Dorsolateral prefrontal cortex (tissue), 120 donors: ENCODE measurements at regions of chr10 and their contacts with region 1.

Region 1: DNA sequence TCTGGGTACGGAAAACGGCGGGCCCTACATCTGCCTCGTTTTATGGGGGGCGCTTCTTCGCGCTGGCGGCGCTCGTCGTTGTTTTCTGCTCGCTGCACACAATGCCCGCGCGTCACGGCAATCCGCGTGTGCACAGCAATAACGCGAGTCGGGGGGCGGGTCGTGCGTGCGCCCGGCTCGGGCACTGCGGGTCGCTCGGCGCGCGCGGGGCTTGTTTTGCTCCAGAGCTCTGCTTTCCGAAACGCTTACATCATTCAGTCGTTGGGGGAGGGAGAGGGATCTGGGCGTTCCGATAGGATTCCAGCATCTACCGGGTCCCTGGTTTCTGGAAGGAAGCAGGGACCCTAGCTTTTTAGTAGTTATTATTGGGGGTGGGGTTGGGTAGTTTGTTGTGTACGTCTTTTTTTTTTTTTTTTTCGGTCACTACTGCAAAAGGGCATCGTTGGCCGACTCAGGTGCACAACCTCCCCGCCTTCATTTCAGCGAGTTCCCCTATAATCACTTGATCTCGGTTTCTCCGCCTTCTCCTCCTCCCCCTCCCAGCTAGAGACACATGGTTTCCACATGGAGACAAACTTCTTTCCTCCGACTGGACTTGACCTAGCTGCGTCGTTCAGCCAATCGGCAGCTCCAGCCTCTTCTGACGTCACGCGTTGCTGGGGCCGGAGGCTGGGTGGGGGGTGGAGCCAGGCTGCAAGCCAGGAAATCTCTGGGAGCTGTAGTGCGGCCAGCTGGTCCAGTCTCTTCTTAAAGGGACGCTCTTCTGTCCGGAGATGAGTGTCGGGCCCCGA is 3.5 kb downstream of the MXI1 start:
- DNase-seq: peak; percentile 97 to 100 (median 99)
- H3K4me3 ChIP-seq: peak overlapping the region; percentile 57 to 96 (median 86)
- H3K27ac ChIP-seq: peak overlapping the region; percentile 88 to 100 (median 100)
- H3K27me3 ChIP-seq: no peaks in the 10 kb centered on the region
- CTCF ChIP-seq: peak in 12 of 56 donors; percentile 0 to 35 (median 16)

Region 2: GRCh38 chr10:109894516-109894915 is 316.4 kb before region 1 on chr10:
- intact Hi-C with region 1: loop called (anchors 5 to 10 kb)
- DNase-seq: peak; percentile 36 to 81 (median 74)
- H3K4me3 ChIP-seq: peak overlapping the region in 4 of 59 donors; percentile 5 to 20 (median 19)
- H3K27ac ChIP-seq: peak overlapping the region; percentile 5 to 94 (median 82)
- H3K27me3 ChIP-seq: no peaks in the 10 kb centered on the region
- CTCF ChIP-seq: peak in 1 of 56 donors; percentile 39

Region 3: DNA sequence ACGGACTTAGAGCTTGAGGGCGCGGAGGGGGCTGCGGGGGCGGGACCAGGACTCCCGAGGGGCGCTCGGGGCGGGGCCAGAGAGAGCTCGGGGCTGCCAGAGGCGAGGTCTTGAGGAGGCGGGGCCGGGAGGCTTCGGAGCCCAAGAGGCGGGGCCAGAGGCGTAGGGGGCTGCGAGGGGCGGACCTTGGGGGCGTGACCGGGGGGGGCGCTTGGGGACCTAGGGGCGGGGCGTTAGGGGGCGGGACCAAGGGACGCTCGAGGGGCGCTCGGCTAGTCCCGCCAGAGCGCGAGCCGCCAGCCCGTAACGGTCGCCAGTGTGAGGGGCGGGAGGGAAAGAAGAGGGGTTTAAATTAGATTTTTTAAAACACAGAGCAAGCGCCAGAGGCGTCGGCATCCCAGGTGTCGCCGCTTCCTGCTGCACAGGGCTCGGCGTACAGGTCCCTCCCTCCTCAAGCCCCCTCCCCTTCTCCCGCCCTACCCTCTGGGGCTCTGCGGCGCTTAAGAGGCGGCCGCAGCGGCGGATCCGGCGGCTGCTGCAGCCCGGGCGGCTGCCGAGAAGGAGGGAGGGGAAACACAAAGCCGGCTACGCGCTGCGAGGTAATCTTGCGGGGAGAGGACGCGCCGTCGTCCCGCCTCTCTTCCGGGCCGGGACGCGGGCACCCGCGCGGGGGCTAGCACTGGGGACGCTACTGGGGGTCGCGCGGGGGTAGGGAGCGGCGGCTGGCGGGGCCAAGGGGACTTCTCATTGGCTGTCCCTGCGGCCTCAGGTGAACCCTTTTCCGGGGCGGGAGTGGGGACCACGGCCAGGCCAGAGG is 203.0 kb before region 1 on chr10 and contains the start of gene ADD3:
- intact Hi-C with region 1: loop called in 1 of 2 experiments (anchors 5 kb)
- DNase-seq: peak; percentile 90 to 98 (median 94)
- H3K4me3 ChIP-seq: peak within 1 kb of the TSS; percentile 73 to 99 (median 94)
- H3K27ac ChIP-seq: peak within 1 kb of the TSS; percentile 84 to 99 (median 97)
- H3K27me3 ChIP-seq: no peaks in the 10 kb centered on the region
- CTCF ChIP-seq: peak in 8 of 56 donors; percentile 3 to 23 (median 12)
- total RNA-seq, gene ADD3: 171 to 457 (median 267) TPM

Region 4: DNA sequence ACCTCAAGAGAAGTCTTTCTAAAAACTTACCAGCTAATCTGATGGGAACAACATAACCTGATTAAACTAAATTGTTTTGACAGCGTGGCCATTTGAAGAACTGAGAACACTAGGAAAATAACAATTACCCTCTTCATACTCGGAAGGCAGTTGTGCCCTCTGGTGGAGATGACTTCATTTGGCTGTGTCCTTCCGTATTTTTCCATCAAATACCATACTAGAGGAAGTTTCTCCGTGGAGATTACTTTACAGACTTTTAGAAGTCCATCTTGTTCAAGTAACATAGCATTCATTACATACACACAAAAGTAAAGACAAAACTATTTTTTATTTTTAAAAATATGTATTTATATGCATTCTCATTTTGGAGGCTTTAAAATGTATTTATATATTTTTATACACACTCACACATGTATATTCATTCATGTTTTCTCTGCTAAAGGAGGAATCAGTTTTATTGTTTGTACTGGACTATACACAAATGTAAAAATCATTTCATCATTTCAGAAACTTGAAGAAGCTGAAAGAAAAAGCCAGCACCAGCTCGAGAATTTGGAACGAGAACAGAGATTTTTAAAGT is 68.6 kb after region 1 on chr10:
- intact Hi-C with region 1: loop called (anchors 5 kb)
- DNase-seq: peak in 5 of 10 donors; percentile 50 to 79 (median 60)
- H3K4me3 ChIP-seq: peak overlapping the region in 45 of 59 donors; percentile 1 to 53 (median 21)
- H3K27ac ChIP-seq: peak overlapping the region; percentile 12 to 99 (median 96)
- H3K27me3 ChIP-seq: no peaks in the 10 kb centered on the region
- CTCF ChIP-seq: peak; percentile 70 to 98 (median 89)

Region 5: DNA sequence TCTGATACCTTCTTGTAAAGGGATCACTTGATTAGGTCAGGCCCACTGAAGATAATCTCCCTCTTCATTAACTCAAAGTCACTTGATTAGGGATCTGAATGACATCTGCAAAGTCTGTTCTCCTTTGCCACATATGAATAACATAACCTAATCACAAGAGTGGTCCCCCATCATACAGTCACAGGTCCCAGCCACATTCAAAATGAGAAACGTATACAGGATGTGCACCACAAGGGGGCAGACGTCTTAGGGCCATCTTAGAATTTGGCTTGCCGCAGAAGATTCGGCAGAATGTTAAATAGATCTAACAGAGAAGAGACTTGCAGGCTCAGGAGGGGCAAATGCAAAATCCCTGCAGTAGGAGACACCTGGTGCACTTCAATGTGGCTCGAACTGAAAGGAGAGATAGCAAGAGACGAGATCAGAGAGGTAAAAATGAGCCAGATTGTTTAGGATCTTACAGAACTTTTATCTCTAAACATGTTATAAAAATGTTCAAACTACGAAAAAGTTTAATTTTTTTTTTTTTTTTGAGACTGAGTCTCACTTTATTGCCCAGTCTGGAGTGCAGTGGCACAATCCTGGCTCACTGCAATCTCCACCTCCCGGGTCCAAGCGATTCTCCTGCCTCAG is 346.2 kb after region 1 on chr10:
- intact Hi-C with region 1: loop called in 1 of 2 experiments (anchors 10 kb)
- DNase-seq: peak in 2 of 10 donors; percentile 22 to 46
- H3K4me3 ChIP-seq: no peak overlapping the region
- H3K27ac ChIP-seq: no peak overlapping the region
- H3K27me3 ChIP-seq: peaks cover 0 to 5% (median 0%) of the 10 kb centered on the region in 45 donors
- CTCF ChIP-seq: peak in 55 of 56 donors; percentile 22 to 72 (median 57)

Region 6: DNA sequence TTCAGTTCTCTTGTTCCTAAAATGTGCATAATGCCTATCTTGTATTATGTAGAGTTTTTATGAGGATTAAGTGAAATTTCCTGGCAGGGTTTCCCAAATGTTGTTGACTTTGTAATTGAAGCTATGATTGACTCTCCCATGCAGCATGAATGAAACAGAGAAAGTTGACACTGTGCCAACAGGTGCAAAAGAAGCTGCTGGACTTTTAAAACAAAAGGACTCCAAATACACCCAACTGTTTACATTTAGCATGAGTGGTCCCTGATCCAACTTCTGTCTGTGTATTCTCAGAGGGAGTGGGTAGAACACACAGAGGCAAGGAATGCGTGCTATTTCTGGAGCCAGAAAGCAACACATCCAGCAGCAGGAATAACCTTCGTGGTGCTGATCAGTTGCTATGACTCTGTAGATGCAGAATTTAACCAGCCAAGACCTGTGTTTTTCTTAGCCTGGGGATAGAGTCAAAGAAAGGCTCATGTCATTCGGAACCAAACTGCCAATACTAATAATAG is 418.9 kb after region 1 on chr10:
- intact Hi-C with region 1: no loop called
- DNase-seq: no peak
- H3K4me3 ChIP-seq: no peak overlapping the region
- H3K27ac ChIP-seq: no peak overlapping the region
- H3K27me3 ChIP-seq: peaks cover 0 to 5% (median 0%) of the 10 kb centered on the region in 45 donors
- CTCF ChIP-seq: no peak